ENCODE measurements at regions of chr17 and their contacts with region 1.

Region 1: GRCh38 chr17:62703775-62704378 is 76.4 kb downstream of the MRC2 start:
- DNase-seq: peak; percentile 70
- H3K4me3 ChIP-seq: peak overlapping the region; percentile 62
- H3K27ac ChIP-seq: no peak overlapping the region
- H3K4me1 ChIP-seq: peaks cover 6% of the 10 kb centered on the region
- H3K27me3 ChIP-seq: no peaks in the 10 kb centered on the region
- CTCF ChIP-seq: peak; percentile 81

Region 2: GRCh38 chr17:62968445-62968923 is 264.6 kb after region 1 on chr17:
- CTCF ChIA-PET with region 1: no interaction called
- POLR2A ChIA-PET with region 1: no interaction called
- intact Hi-C with region 1: loop called (anchors 1 kb)
- DNase-seq: peak; percentile 87
- H3K4me3 ChIP-seq: no peak overlapping the region
- H3K27ac ChIP-seq: no peak overlapping the region
- H3K4me1 ChIP-seq: peaks cover 7% of the 10 kb centered on the region
- H3K27me3 ChIP-seq: peaks cover 4% of the 10 kb centered on the region
- CTCF ChIP-seq: peak; percentile 87